ENCODE measurements at regions of chr7 and their contacts with region 1.

Region 1: GRCh38 chr7:13879994-13880686 is 109.3 kb downstream of the ETV1 start:
- DNase-seq: peak; percentile 87
- H3K4me3 ChIP-seq: peak overlapping the region in 2 of 3 experiments; percentile 7 to 19
- H3K27ac ChIP-seq: peak overlapping the region; percentile 77
- H3K4me1 ChIP-seq: peaks cover 15% of the 10 kb centered on the region
- H3K27me3 ChIP-seq: no peaks in the 10 kb centered on the region
- CTCF ChIP-seq: no peak

Region 2: DNA sequence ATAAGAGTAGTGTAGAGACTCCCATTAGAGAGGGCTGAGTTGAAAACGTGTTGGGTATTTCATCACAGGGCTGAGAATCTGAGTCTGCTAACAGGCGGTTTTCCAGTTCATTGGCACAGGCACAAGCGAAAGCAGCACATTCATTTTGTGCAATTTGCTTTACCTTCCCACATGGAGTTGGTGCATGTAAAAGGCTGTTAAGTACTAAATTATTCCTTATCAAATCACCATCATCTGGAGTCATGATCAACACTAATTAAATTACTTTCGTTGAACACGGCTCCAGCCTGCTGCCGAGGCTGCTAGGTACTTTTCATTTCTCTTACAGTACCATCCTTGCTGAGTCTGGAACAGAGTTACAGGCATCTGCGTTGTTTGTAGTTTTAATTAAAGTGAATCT is 65.5 kb after region 1 on chr7:
- CTCF ChIA-PET with region 1: no interaction called
- dilution Hi-C with region 1: loop called (anchors 5 kb)
- in situ Hi-C with region 1: no loop called
- intact Hi-C with region 1: no loop called
- DNase-seq: no peak
- H3K4me3 ChIP-seq: no peak overlapping the region
- H3K27ac ChIP-seq: no peak overlapping the region
- H3K4me1 ChIP-seq: peaks cover 6% of the 10 kb centered on the region
- H3K27me3 ChIP-seq: no peaks in the 10 kb centered on the region
- CTCF ChIP-seq: no peak